Activated T-helper 1 cell treated with anti-CD3 and anti-CD28 coated beads, Interleukin-12 subunit alpha, Interleukin-12 subunit beta, Interleukin-2, Interleukin-4 antibody, amounts not matched to agents 30 ng/mL and 10 ng/mL and 1 ng/mL, durations not matched to agents 14 hours and 24 hours and 36 hours (primary cell): ENCODE measurements at regions of chr4 and their contacts with region 1.

Region 1: GRCh38 chr4:89294573-89295269 is 12.9 kb downstream of the GPRIN3 start:
- DNase-seq: no peak
- H3K4me3 Mint-ChIP-seq: peak overlapping the region; percentile 77
- H3K27ac Mint-ChIP-seq: peak overlapping the region; percentile 99
- H3K4me1 Mint-ChIP-seq: peaks cover 89% of the 10 kb centered on the region
- H3K27me3 Mint-ChIP-seq: no peaks in the 10 kb centered on the region

Region 2: GRCh38 chr4:88591787-88592599 is 702.7 kb before region 1 on chr4 and contains the start of gene HERC3:
- intact Hi-C with region 1: loop called (anchors 2 kb)
- DNase-seq: peak; percentile 88
- H3K4me3 Mint-ChIP-seq: peak within 1 kb of the TSS; percentile 91
- H3K27ac Mint-ChIP-seq: peak within 1 kb of the TSS; percentile 88
- H3K4me1 Mint-ChIP-seq: peaks cover 35% of the 10 kb centered on the region
- H3K27me3 Mint-ChIP-seq: peaks cover 28% of the 10 kb centered on the region
- total RNA-seq, gene HERC3: 12.8 and 14.2 TPM in 2 replicates

Region 3: DNA sequence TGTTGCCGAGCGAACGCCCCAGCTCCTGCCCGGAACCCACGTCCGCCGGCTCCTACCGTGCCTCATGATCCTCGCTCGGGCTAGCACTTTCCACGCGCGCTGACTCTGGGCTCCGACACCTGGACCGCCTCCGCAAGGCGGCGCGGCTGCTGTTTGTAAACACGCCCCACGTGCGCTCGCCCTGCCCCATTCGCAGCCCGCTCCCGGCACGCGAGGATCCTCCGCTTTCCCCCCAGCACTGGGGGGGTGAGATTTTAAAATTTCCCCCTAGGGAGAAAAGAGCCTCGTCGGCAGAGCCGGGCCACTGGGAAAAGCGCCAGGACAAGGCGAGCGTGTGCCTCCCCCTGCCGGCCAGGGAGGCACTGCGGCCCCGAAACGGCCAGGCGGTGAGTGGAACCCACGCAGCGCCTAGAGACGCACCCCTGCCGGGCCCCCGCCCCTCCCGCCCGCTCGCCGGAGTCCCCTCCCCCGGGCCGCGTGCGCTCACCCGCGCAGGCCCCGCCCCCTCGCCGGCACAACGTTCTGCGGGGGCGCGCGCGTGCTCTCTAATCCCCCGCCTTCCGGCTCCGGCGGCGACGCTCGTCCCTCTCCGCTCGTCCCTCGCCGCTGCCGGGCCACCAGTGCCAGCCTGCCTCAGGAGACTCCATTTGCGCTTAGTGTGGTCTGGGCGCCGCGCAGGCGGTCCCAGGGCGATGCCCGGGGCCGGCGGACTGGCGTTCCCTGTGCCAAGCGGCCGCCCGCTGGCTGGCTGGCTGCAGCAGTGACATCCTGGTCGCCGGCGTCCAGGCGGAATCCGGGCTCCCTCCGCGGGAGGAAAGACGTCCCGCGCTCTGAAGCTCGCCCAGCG is 183.5 kb before region 1 on chr4 and contains the start of gene TIGD2:
- intact Hi-C with region 1: loop called (anchors 5 kb)
- DNase-seq: peak; percentile 80
- H3K4me3 Mint-ChIP-seq: peak within 1 kb of the TSS; percentile 86
- H3K27ac Mint-ChIP-seq: peak within 1 kb of the TSS; percentile 71
- H3K4me1 Mint-ChIP-seq: peaks cover 27% of the 10 kb centered on the region
- H3K27me3 Mint-ChIP-seq: peaks cover 20% of the 10 kb centered on the region
- total RNA-seq, gene TIGD2: 2.0 and 2.3 TPM in 2 replicates

Region 4: GRCh38 chr4:89254847-89255246 is 39.9 kb before region 1 on chr4:
- intact Hi-C with region 1: loop called (anchors 2 kb)
- DNase-seq: peak; percentile 13
- H3K4me3 Mint-ChIP-seq: no peak overlapping the region
- H3K27ac Mint-ChIP-seq: peak overlapping the region; percentile 68
- H3K4me1 Mint-ChIP-seq: peaks cover 76% of the 10 kb centered on the region
- H3K27me3 Mint-ChIP-seq: no peaks in the 10 kb centered on the region

Region 5: GRCh38 chr4:89316931-89317366 is 22.2 kb after region 1 on chr4:
- intact Hi-C with region 1: loop called (anchors 1 kb)
- DNase-seq: no peak
- H3K4me3 Mint-ChIP-seq: peak overlapping the region; percentile 64
- H3K27ac Mint-ChIP-seq: peak overlapping the region; percentile 84
- H3K4me1 Mint-ChIP-seq: peaks cover 38% of the 10 kb centered on the region
- H3K27me3 Mint-ChIP-seq: no peaks in the 10 kb centered on the region

Region 6: DNA sequence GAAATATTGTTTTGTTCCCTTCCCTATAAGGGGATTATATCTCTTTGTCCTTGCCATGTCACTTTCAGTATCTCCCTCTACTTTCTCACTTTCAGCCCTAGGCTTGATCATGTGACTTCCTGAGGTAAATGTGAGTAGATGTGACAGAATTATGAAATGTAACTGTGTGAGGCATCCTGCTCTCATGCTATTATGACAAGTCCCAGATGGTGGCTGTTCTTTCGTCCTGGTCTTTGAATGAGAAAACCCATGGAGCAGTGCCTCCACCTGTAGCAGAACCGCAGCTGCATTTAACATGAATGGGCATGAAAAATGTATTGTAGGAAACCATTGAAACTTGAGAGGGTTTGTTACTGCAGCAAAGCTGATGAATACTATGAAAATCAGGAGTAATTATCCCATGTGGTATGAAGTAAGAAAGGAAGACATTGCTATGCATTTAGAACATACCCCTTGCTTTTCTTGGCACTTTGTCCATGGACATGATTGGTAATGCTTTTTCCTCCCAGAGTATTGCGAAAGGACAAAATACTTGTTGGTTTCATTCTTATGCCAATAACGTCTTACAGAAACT is 215.1 kb after region 1 on chr4:
- intact Hi-C with region 1: loop called (anchors 2 kb)
- DNase-seq: peak; percentile 11
- H3K4me3 Mint-ChIP-seq: no peak overlapping the region
- H3K27ac Mint-ChIP-seq: no peak overlapping the region
- H3K4me1 Mint-ChIP-seq: peaks cover 17% of the 10 kb centered on the region
- H3K27me3 Mint-ChIP-seq: peaks cover 23% of the 10 kb centered on the region